Transverse colon (tissue), 4 donors: ENCODE measurements at regions of chr2 and their contacts with region 1.

Region 1: DNA sequence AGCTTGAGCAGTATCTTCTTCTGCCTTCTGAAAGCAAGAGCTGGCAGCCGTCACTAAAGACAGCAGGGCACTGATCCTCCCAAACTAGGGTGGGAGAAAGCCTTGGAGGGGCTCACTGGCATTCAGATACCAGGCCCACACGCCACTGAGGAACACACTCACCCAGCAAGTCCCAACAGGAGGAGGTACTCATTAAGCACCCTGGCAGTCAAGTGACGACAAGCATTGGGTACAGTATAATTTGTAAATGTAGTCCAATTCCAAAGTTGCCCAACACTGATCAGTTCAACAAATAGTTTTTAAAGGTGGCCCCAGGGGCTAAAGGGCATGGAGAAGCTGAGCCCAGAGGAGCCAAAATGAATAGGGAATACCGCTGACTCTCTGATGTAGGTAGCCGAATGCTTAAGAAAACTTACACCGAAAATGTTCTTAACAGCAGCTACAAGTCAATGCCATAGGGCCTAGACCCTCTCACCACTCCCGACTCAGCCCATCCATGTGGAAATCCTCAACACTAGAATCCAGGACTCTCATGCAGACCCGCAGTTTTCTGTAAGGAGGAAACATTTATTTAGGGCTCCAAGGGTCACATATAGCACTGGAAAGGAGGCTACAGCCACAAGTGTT is 9.9 kb downstream of the LIMS2 start:
- DNase-seq: no peak
- H3K4me3 ChIP-seq: no peak overlapping the region
- H3K27ac ChIP-seq: peak overlapping the region; percentile 54 to 84 (median 74)
- H3K4me1 ChIP-seq: peaks cover 14 to 35% (median 25%) of the 10 kb centered on the region in 4 donors
- H3K27me3 ChIP-seq: peaks cover 66% of the 10 kb centered on the region
- CTCF ChIP-seq: no peak
- EP300 ChIP-seq: no peak
- POLR2A ChIP-seq: no peak

Region 2: DNA sequence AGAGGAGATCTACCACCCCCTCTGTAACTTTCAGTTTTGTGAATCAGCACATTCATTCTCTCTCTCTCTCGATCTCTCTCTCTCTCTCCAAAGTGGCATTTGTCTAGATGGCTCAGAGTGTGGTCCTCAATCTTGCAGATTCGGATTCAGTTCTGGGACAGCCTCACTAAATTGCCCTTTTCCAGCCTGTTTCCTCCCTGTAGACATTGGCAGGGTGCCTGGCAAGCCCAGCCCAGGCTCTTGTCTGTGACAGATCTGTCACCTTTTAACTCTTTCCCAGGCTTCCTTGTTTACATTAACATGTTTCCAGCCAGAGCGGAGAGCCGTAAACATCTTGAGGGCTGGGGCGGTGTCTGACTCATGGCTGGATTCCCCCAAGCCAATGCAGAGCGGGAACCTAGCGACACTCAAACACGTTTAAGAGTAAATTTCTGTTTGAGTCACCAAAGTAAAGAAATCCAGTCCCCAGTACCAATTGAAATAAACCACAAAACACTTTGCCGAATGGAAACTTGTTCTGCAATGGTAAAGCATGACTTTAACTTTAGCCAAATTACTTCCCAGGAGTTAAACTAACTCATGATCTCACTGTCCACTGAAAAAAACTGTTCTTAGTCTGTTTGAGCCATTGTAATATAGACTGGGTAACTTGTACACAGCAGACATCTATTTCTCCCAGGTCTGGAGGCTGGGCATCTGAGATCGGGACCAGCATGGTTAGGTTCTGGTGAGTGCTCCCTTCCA is 438.7 kb before region 1 on chr2:
- in situ Hi-C with region 1: no loop called
- intact Hi-C with region 1: loop called (anchors 5 kb)
- DNase-seq: peak; percentile 86
- H3K4me3 ChIP-seq: peak overlapping the region in 1 of 4 donors; percentile 4
- H3K27ac ChIP-seq: peak overlapping the region; percentile 8 to 49 (median 22)
- H3K4me1 ChIP-seq: peaks cover 4 to 15% (median 10%) of the 10 kb centered on the region in 4 donors
- H3K27me3 ChIP-seq: peaks cover 35% of the 10 kb centered on the region
- CTCF ChIP-seq: no peak
- EP300 ChIP-seq: no peak
- POLR2A ChIP-seq: no peak